Activated naive CD4-positive, alpha-beta T cell treated with anti-CD3 and anti-CD28 coated beads for 36 hours (primary cell): ENCODE measurements at regions of chr7 and their contacts with region 1.

Region 1: GRCh38 chr7:64562626-64563275 is at the start of gene ZNF680:
- DNase-seq: peak; percentile 96
- H3K4me3 Mint-ChIP-seq: peak within 1 kb of the TSS; percentile 100
- H3K27ac Mint-ChIP-seq: peak within 1 kb of the TSS; percentile 97
- H3K4me1 Mint-ChIP-seq: peaks cover 24% of the 10 kb centered on the region
- H3K27me3 Mint-ChIP-seq: no peaks in the 10 kb centered on the region
- total RNA-seq, gene ZNF680: 13.4 to 14.0 TPM

Region 2: DNA sequence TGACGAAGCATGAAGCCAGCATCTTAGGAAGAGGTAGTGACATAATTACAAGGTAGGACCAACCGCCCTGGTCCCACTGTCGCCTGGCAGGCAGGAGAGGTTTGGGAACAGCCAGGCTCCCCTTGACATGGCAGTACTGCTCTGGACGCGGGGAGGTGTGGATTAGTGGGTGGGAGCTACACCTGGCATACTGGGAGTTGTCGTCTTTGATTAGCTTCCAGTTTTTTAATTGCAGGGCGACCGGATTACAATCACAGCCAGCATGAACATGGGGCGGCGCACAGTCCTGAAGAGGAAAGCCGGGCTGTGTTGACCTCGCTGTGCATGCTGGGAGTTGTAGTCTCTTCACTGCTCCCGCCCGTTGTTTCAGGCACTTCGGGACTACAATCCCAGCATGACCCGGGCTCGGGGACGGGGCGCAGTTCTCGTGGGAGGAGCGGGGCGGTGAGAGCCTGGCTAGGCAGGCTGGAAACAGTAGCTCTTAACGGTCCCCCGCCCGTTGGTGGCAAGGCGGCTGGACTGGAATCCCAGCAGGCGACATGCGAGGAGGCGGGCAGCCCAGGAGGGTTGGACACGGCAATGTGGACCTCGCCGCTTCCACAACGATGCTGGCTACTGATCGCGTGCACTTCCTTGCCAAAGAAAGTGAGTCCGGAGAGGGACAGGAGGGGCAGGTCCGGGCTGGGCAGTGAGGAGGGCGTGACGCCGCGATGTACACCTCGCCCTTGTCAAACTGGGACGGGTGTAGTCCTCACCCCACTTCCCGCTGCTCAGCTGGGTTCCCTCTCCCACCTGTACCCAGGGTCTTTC is 662.2 kb before region 1 on chr7:
- CTCF ChIA-PET with region 1: no interaction called
- intact Hi-C with region 1: loop called (anchors 1 kb)
- DNase-seq: peak; percentile 95
- H3K4me3 Mint-ChIP-seq: peak overlapping the region; percentile 93
- H3K27ac Mint-ChIP-seq: peak overlapping the region; percentile 77
- H3K4me1 Mint-ChIP-seq: peaks cover 8% of the 10 kb centered on the region
- H3K27me3 Mint-ChIP-seq: no peaks in the 10 kb centered on the region

Region 3: DNA sequence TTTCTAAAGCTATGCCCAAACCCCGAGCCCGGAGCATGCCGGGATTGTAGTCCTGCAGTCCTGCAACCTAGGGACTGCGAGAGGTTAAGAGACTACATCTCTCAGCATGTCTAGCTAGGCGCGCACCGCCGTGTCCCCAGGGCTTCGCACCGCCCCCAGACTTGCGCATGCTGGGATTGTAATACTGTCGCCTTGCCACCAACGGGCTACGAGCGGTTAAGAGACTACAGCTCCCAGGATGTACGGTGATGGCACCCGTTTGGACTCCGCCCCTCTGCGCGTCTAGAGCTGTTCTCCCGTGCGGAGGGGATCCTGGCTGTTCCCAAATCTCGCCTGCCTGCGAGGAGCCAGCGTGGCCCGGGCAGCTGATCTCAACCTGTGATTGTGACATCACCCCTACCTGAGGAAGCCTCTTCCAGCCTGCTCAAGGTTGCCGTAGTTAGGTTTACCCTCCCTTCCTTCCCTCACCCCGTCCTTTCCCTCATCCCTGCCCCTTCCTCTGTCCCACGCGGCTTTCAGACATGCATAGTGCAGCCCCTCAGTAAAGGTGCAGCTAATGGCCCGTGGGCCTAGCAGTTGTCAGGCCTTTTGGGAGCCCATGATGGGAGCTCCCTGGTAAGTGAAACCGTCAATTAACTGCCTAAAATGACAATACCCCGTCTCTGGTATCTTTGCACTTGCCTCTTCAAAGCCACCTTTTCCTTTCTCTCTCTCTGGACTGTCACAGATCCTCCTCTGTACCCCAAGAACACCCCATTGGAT is 255.3 kb before region 1 on chr7:
- CTCF ChIA-PET with region 1: no interaction called
- intact Hi-C with region 1: loop called (anchors 1 kb)
- DNase-seq: peak; percentile 95
- H3K4me3 Mint-ChIP-seq: peak overlapping the region; percentile 89
- H3K27ac Mint-ChIP-seq: peak overlapping the region; percentile 95
- H3K4me1 Mint-ChIP-seq: peaks cover 26% of the 10 kb centered on the region
- H3K27me3 Mint-ChIP-seq: no peaks in the 10 kb centered on the region

Region 4: GRCh38 chr7:64313740-64314491 is 248.8 kb before region 1 on chr7 and contains the start of gene ZNF736:
- CTCF ChIA-PET with region 1: no interaction called
- intact Hi-C with region 1: loop called (anchors 1 kb)
- DNase-seq: peak; percentile 94
- H3K4me3 Mint-ChIP-seq: peak within 1 kb of the TSS; percentile 99
- H3K27ac Mint-ChIP-seq: peak within 1 kb of the TSS; percentile 97
- H3K4me1 Mint-ChIP-seq: peaks cover 35% of the 10 kb centered on the region
- H3K27me3 Mint-ChIP-seq: no peaks in the 10 kb centered on the region
- total RNA-seq, gene ZNF736: 22.7 to 24.0 TPM

Region 5: DNA sequence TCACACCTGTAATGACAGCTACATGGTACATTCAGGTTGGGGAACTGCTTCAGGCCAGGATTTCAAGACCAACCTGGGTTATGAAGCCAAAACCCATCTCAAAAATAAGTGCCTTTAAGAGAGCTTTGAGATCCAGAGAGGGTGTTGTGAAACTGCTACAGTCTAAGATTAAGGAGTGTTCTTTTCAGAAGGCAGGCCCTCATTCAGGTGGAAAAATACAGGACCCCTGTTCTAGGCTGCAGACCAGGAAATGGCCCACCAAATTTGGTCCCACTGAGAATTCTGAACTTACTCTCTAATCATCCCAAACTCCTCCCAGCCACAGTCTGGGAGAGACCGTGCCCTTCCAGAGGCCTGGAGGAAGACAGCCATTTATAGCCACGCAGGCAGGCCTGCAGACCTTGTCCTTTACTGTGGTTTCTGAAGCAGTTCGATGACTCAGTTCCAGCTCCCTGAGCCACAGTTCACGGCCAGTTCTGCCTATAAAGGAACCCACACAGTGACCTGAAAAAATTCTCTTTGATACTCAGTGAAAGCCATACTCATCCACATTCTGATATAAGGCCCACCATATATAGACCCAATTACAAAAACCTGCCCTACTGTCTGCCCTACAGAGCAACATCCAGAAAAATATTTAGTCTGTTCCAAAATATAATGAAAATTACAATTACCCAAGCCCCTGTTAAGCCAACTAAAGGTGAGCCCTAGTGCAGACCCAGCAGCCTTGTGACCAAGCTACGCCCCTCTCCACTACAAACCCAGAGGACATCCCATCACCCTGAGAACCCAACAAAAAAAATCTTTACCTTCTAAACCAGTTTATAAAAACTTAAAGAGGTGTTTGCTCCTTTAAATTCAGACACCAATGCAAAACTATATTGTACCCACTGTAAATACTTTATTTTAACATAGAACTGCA is 21.1 kb before region 1 on chr7:
- CTCF ChIA-PET with region 1: no interaction called
- intact Hi-C with region 1: no loop called
- DNase-seq: no peak
- H3K4me3 Mint-ChIP-seq: no peak overlapping the region
- H3K27ac Mint-ChIP-seq: no peak overlapping the region
- H3K4me1 Mint-ChIP-seq: peaks cover 4% of the 10 kb centered on the region
- H3K27me3 Mint-ChIP-seq: no peaks in the 10 kb centered on the region

Region 6: DNA sequence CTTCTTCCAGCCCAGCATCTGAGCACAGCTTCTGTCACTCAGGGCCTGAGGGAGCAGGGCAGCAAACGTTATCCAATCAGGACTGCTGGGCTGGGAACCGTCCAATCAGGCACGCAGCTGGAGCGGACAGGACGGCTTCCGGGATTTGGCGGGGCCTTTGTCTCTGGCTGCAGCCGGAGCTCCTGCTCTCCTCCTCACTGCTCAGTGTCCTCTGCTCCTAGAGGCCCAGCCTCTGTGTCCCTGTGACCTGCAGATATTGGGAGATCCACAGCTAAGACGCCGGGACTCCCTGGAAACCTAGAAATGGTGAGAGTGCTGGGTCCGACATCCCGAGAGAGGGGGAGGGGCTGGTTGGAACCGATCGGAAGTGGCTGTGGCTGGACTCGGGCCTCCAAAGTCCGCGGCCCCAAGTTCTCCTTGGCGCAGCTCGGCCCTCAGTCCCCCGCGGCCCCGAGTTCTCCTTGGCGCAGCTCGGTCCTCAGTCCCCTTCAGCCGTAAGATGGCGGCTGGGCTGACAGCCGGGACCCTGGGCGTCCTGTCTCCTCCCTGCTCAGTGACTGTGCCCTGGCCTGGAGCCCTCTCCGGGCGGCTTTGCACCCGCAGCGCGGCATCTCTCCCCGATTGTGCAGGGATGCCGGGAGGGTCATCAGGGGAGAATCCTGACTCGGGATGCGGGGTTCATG is 103.4 kb after region 1 on chr7 and contains the start of gene ZNF107:
- CTCF ChIA-PET with region 1: interaction called, 3 read pairs
- intact Hi-C with region 1: loop called (anchors 2 kb)
- DNase-seq: peak; percentile 93
- H3K4me3 Mint-ChIP-seq: peak within 1 kb of the TSS; percentile 95
- H3K27ac Mint-ChIP-seq: peak within 1 kb of the TSS; percentile 96
- H3K4me1 Mint-ChIP-seq: peaks cover 47% of the 10 kb centered on the region
- H3K27me3 Mint-ChIP-seq: no peaks in the 10 kb centered on the region
- total RNA-seq, gene ZNF107: 7.7 to 8.0 TPM

Region 7: GRCh38 chr7:65475734-65476319 is 913.1 kb after region 1 on chr7:
- CTCF ChIA-PET with region 1: no interaction called
- intact Hi-C with region 1: no loop called
- DNase-seq: peak; percentile 14
- H3K4me3 Mint-ChIP-seq: no peak overlapping the region
- H3K27ac Mint-ChIP-seq: no peak overlapping the region
- H3K4me1 Mint-ChIP-seq: peaks cover 26% of the 10 kb centered on the region
- H3K27me3 Mint-ChIP-seq: peaks cover 14% of the 10 kb centered on the region